Activated naive CD4-positive, alpha-beta T cell treated with anti-CD3 and anti-CD28 coated beads for 36 hours (primary cell): ENCODE measurements at regions of chr6 and their contacts with region 1.

Region 1: DNA sequence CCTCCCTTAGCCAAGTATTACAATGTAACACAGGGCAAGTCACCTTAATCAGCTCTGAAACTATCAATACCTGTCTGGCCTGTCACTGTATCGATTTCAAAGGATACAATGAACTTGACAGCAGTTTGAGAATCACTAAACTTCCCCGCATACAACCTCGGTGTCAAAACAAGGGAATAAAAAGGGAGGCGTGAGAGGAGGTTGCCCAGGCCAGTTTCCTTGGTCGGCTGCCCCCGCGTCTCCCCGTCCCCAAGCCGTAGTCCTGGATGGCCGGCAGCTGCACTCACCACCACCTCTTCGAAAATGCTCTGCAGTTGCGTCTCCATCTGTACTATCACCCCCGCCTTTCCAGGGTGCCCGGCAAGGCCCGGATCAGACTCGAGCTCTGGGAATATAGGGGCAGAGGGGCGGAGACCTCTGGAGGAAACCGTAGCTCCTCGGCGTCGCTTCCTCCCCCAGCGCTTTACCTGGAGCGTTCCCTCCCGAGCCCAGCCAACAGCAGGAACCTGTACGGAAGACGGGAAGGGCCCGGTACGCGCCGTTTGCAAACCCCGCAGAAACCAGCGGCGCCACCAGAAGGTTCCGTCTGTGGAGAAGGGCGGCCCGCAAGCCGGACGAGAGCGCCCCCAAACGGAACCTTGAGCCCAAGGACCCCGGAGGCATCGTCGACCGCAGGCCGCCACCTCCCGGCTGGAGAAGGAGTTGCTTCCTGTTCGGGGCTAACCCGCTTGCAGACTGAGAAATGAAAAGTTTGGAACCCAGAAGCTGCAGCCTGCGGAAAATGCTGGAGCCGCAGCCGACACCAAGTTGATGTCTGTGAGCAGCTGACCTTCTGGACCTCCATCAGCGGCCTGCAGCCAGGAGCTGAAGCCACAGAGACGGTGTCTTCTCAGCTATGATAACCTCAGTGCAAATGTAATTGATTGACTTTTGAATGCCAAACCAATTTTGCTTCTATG is at the start of gene MED23:
- DNase-seq: peak; percentile 96
- H3K4me3 Mint-ChIP-seq: peak within 1 kb of the TSS; percentile 99
- H3K27ac Mint-ChIP-seq: peak within 1 kb of the TSS; percentile 92
- H3K4me1 Mint-ChIP-seq: peaks cover 29% of the 10 kb centered on the region
- H3K27me3 Mint-ChIP-seq: no peaks in the 10 kb centered on the region
- total RNA-seq, gene MED23: 27.4 to 28.8 TPM

Region 2: DNA sequence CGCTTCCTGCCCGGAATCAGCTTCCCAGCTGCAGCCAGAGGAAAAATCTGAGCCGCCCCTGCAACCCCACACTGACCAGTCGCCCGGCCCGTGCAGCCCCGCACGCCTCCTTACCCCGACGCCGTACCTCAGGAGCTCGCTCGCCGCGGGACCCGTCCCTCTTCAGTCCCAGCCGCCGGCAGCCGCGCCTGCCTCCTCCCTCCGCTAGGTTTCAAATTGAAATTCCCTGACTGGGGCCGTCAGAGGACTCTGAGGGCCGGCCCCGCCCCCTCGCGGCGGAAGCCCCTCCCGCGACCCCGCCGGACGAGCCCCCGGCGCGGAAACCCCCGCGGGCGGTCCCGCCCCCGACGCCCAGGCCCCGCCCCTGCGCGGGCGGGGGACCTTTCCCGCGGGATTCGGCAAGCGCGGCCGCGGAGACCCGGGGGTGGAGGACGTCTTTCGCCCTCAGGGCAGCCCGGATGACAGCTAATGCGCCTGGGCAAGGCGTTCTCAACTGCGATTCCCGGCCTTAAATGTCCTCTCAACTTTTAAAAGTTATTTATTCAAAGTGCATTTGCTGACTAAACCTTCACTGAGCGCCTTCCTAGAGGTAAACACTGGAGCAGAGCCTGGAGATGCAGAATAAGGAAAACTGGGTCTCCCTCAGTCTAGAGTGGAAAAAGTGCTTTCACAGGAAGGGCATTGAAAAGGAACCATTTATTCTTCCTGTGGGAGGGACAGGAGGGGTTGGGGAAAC is 564.8 kb before region 1 on chr6 and contains the start of gene EPB41L2:
- CTCF ChIA-PET with region 1: no interaction called
- intact Hi-C with region 1: loop called (anchors 2 kb)
- DNase-seq: peak; percentile 80
- H3K4me3 Mint-ChIP-seq: peak within 1 kb of the TSS; percentile 80
- H3K27ac Mint-ChIP-seq: no peak within 1 kb of the TSS
- H3K4me1 Mint-ChIP-seq: peaks cover 22% of the 10 kb centered on the region
- H3K27me3 Mint-ChIP-seq: peaks cover 2% of the 10 kb centered on the region
- total RNA-seq, gene EPB41L2: 33.5 to 37.7 TPM

Region 3: DNA sequence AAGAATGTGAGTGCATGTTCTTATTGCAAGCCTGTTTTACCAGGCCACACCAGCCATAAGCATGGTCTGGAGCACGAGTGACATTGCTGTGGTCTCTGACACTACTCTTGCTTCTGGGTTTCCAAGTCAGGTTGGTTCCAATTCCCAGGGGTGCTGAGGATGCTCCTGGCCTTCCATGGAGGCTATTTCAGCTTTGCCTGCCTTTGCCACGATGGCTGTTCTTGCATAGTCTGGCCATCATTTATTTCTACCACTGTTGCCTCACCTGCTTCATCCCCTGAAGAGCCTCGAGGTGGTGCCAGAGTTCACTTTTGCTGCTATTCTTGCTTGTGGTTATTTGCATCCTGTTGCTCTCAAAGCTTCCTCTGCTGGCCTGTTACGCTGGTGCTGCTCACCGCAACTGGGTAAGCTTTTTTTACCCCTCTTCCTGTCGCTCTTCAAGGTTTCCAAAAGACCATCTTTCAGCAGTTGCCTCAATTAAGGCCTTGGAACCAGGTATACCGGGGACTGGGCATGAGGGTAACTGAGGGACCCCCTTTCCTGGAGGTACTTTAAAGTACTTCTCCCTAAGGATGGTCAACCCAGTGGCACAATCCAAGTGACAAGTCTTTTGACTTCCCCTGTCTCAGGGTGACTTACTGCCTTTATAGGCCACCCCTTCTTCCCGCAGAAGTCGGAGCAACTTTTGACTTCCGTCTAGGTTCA is 428.3 kb before region 1 on chr6:
- CTCF ChIA-PET with region 1: interaction called, 19 read pairs
- intact Hi-C with region 1: loop called (anchors 1 kb)
- DNase-seq: peak; percentile 84
- H3K4me3 Mint-ChIP-seq: peak overlapping the region; percentile 78
- H3K27ac Mint-ChIP-seq: peak overlapping the region; percentile 96
- H3K4me1 Mint-ChIP-seq: peaks cover 57% of the 10 kb centered on the region
- H3K27me3 Mint-ChIP-seq: no peaks in the 10 kb centered on the region

Region 4: DNA sequence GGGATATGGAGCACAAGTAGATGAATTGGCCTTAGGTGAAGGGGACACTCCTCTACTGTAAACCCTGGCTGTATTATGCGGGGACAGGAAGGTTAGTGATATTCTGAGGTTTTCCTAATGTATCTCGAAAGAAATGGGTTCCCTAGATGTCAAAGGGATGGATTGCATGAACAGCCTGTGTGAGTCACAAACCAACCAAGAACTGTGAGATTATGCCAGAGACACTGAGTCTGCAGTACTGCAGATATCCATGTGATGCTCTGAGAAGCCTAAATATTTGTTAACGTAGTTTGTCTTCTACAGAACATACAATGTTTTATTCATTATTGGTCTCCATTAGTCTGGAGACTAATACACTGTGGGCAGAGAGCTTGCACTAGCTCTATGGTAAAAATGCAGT is 310.5 kb before region 1 on chr6:
- CTCF ChIA-PET with region 1: no interaction called
- intact Hi-C with region 1: no loop called
- DNase-seq: no peak
- H3K4me3 Mint-ChIP-seq: no peak overlapping the region
- H3K27ac Mint-ChIP-seq: no peak overlapping the region
- H3K4me1 Mint-ChIP-seq: no peaks in the 10 kb centered on the region
- H3K27me3 Mint-ChIP-seq: no peaks in the 10 kb centered on the region

Region 5: GRCh38 chr6:131519670-131520436 is 108.2 kb before region 1 on chr6:
- CTCF ChIA-PET with region 1: interaction called, 10 read pairs
- intact Hi-C with region 1: loop called (anchors 1 kb)
- DNase-seq: peak; percentile 76
- H3K4me3 Mint-ChIP-seq: no peak overlapping the region
- H3K27ac Mint-ChIP-seq: peak overlapping the region; percentile 24
- H3K4me1 Mint-ChIP-seq: peaks cover 13% of the 10 kb centered on the region
- H3K27me3 Mint-ChIP-seq: no peaks in the 10 kb centered on the region

Region 6: GRCh38 chr6:131640100-131640499 is 12.1 kb after region 1 on chr6:
- CTCF ChIA-PET with region 1: interaction called, 33 read pairs
- intact Hi-C with region 1: no loop called
- DNase-seq: no peak
- H3K4me3 Mint-ChIP-seq: no peak overlapping the region
- H3K27ac Mint-ChIP-seq: no peak overlapping the region
- H3K4me1 Mint-ChIP-seq: peaks cover 2% of the 10 kb centered on the region
- H3K27me3 Mint-ChIP-seq: no peaks in the 10 kb centered on the region